ENCODE measurements at regions of chr14 and their contacts with region 1.

Region 1: DNA sequence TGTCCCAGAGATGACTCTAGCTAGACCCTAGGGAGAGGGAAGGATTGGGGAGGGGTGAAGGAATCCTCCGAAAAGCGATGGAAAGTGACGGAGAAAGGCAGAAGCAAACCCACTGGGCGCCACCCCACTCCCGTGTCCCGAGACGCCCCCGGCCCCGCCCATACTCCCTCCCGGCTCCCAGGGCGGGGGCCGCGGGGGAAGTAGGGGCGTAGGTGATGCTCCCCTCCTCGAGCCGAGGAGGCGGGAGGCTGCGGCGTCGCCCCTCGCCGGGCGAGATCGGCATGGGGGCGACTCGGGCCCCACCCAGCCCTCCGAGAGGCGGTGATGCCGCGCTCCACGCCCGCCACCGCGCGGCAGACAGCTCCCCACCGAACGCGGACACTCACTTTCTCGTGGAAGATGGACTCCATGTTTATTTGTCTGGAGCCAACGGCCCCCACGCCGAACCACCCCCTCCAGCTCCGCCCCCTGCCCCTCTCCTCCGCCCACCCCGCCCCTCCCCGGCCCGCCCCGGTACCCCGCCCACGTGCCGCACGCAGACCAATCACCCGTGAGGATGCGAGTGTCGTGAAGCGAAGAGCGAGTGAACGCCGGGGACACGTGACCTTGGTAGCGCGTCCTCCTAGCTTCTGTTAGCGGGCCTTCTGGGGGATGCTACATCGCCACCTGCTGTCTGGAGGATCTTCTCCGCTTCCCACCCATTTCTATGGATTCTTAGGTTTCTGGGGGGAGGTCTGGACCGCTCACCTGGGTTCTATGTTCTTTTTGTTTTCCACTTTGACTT is at the start of gene ATXN3:
- DNase-seq: peak; percentile 86 to 99
- ATAC-seq: peak; percentile 91 to 98 (median 96)
- H3K4me3 ChIP-seq: peak within 1 kb of the TSS; percentile 76
- H3K4me3 Mint-ChIP-seq: peak within 1 kb of the TSS; percentile 99
- H3K27ac ChIP-seq: peak within 1 kb of the TSS; percentile 70
- H3K27ac Mint-ChIP-seq: peak within 1 kb of the TSS; percentile 88 to 91
- H3K4me1 ChIP-seq: peaks cover 17% of the 10 kb centered on the region
- H3K4me1 Mint-ChIP-seq: peaks cover 18 to 22% of the 10 kb centered on the region in 2 donors
- H3K27me3 ChIP-seq: no peaks in the 10 kb centered on the region
- H3K27me3 Mint-ChIP-seq: no peaks in the 10 kb centered on the region
- CTCF ChIP-seq: peak; percentile 74
- total RNA-seq, gene ATXN3: 26.7 to 40.5 (median 30.7) TPM

Region 2: DNA sequence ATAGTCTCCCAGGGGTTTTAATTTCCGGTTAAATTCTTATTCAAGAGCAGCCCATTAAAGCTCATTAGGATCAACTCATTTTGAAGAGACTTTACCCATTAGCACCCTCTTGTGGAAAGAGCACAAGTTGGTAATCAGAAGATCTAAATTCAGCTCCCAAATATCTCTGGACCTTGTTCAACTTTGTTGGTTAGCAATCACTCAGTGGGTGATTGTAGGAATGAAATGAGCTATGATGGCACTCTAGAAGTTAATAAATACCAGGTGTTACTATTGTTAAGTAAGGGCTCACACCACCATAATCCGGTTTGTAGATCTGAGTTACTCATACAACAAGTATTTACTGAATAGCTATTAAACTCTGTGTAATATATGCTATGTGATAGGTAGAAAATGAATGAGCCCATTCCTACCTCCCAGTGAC is 109.4 kb before region 1 on chr14:
- intact Hi-C with region 1: no loop called
- DNase-seq: peak in 1 of 2 donors; percentile 71
- ATAC-seq: peak in 2 of 3 donors; percentile 64 to 65
- H3K4me3 ChIP-seq: no peak overlapping the region
- H3K4me3 Mint-ChIP-seq: no peak overlapping the region
- H3K27ac ChIP-seq: no peak overlapping the region
- H3K27ac Mint-ChIP-seq: peak overlapping the region; percentile 69 to 84
- H3K4me1 ChIP-seq: no peaks in the 10 kb centered on the region
- H3K4me1 Mint-ChIP-seq: peaks cover 22 to 35% of the 10 kb centered on the region in 2 donors
- H3K27me3 ChIP-seq: no peaks in the 10 kb centered on the region
- H3K27me3 Mint-ChIP-seq: no peaks in the 10 kb centered on the region
- CTCF ChIP-seq: peak; percentile 66

Region 3: GRCh38 chr14:92121670-92122350 is 15.5 kb after region 1 on chr14 and contains the starts of genes CPSF2 and NDUFB1:
- intact Hi-C with region 1: loop called (anchors 2 kb)
- DNase-seq: peak; percentile 84 to 90
- ATAC-seq: peak; percentile 84 to 93 (median 90)
- H3K4me3 ChIP-seq: peak within 1 kb of the TSS; percentile 94
- H3K4me3 Mint-ChIP-seq: peak within 1 kb of the TSS; percentile 100
- H3K27ac ChIP-seq: peak within 1 kb of the TSS; percentile 94
- H3K27ac Mint-ChIP-seq: peak within 1 kb of the TSS; percentile 97 to 99
- H3K4me1 ChIP-seq: peaks cover 23% of the 10 kb centered on the region
- H3K4me1 Mint-ChIP-seq: peaks cover 31 to 40% of the 10 kb centered on the region in 2 donors
- H3K27me3 ChIP-seq: no peaks in the 10 kb centered on the region
- H3K27me3 Mint-ChIP-seq: no peaks in the 10 kb centered on the region
- CTCF ChIP-seq: no peak
- total RNA-seq, gene CPSF2: 24.2 to 39.8 (median 28.6) TPM
- total RNA-seq, gene NDUFB1: 40.9 to 55.4 (median 45.0) TPM